Left ventricle myocardium inferior (tissue), 1 donor: ENCODE measurements at regions of chr2 and their contacts with region 1.

Region 1: DNA sequence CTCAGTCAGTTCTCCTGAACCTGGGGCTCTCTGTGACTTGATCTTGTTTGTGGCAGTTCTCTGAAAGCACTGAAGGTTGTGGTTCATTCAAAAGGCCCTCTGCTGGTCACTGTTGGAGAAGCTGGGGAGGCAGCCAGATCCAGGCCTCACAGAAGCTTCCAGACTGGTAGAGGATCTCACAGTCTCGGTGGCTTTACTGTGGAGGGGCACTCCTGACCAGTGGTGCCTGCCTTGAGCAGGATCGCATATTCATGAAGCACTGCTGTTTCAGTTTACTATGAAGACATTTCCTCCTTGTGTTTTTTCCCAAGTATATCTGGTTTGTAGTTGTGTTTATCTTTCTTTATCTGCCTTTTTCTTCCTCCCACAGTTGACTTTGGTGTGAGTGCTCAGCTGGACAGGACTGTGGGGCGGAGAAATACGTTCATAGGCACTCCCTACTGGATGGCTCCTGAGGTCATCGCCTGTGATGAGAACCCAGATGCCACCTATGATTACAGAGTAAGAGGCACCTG is 133.9 kb downstream of the MAP4K4 start:
- DNase-seq: peak; percentile 74
- H3K4me3 ChIP-seq: no peak overlapping the region
- H3K27ac ChIP-seq: peak overlapping the region; percentile 73
- H3K4me1 ChIP-seq: peaks cover 56% of the 10 kb centered on the region
- H3K27me3 ChIP-seq: no peaks in the 10 kb centered on the region
- CTCF ChIP-seq: peak; percentile 85

Region 2: DNA sequence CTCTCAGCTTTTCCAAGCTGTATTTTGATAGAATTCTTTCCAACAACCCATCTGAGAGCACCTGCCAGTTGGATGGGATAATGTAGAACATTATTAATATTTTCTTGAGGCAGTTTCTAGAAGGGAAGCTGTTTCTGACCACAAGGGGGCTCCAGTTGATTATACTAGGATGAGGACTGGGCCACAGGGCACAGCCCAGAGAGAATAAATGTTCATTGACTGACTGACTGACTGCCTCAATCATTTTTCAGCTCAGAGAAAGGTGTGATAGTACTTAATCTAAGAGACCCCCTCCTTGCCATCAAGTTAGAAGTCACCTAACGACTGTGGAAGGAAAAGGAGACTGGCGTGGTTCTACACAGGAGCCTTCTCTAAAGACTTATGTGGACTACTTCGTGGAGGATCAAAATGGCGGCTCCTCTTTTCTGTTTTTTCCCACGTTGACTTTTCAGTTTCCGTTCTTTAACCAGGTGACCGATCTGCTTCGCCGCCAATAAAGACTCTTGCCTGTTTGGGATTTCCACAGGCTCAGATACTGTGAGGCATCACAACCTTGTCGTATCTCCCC is 412.2 kb before region 1 on chr2:
- intact Hi-C with region 1: loop called (anchors 10 kb)
- DNase-seq: no peak
- H3K4me3 ChIP-seq: no peak overlapping the region
- H3K27ac ChIP-seq: no peak overlapping the region
- H3K4me1 ChIP-seq: peaks cover 7% of the 10 kb centered on the region
- H3K27me3 ChIP-seq: no peaks in the 10 kb centered on the region
- CTCF ChIP-seq: peak; percentile 85

Region 3: GRCh38 chr2:101518578-101519492 is 312.6 kb before region 1 on chr2:
- intact Hi-C with region 1: loop called (anchors 5 kb)
- DNase-seq: peak; percentile 35
- H3K4me3 ChIP-seq: peak overlapping the region; percentile 36
- H3K27ac ChIP-seq: peak overlapping the region; percentile 60
- H3K4me1 ChIP-seq: peaks cover 37% of the 10 kb centered on the region
- H3K27me3 ChIP-seq: no peaks in the 10 kb centered on the region
- CTCF ChIP-seq: peak; percentile 63

Region 4: DNA sequence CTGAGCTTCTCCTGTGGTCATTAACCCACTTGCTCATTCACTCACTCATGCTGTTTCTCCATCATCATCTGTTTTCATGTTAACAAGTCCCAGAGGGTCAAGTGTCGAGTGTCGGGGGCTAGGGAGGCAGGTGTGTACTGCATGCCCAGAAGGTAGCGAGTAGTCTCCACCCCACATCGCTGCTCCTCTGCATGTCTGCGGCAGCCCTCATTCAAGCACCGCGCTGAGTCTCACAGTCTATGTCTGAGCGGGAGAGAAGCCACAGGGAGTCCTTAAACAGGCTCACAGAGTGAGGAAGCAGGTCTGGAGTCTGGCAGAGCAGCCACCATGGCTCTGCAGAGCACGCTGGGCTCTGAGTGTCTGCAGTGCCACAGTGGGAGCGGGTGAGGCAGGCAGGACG is 39.0 kb after region 1 on chr2:
- intact Hi-C with region 1: no loop called
- DNase-seq: no peak
- H3K4me3 ChIP-seq: no peak overlapping the region
- H3K27ac ChIP-seq: no peak overlapping the region
- H3K4me1 ChIP-seq: peaks cover 12% of the 10 kb centered on the region
- H3K27me3 ChIP-seq: no peaks in the 10 kb centered on the region
- CTCF ChIP-seq: no peak

Region 5: DNA sequence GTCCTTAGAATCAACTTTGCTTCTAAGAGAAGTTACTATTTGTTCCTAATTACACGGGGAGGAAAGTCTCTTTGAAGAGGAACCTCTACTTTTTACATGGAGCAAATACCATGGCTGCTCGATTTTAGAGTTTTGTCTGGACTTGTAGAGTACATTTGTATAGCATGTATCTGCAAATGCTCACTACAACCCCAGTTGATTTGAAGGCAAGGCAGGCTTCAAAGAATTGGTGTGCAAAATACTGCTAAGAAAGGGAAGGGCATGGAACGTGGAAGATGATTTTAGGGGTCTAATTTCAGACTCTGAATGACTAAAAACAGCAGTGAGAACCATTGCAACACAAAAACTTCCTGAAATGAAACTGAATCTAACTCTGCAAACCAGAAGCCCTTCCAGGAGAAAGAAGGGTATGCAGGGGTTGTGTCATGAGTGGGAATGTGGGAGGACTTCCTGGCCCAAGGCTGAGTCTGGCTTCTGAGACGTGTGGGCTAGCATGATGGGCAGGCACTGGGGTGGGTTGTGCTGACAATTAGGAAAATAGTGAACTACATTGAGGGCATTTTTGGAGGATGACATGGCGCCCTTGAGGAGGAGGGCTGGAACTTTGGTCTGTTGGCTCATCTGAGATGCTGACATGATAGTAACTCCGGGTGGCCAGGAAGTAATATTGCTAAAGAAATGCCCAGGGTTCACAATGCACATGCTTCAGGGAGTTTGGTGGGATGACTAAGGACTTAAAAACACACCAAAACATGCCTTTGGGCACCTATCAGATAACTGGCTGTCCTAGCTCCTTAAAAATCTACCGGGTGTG is 141.4 kb after region 1 on chr2:
- intact Hi-C with region 1: no loop called
- DNase-seq: no peak
- H3K4me3 ChIP-seq: no peak overlapping the region
- H3K27ac ChIP-seq: no peak overlapping the region
- H3K4me1 ChIP-seq: peaks cover 3% of the 10 kb centered on the region
- H3K27me3 ChIP-seq: peaks cover 11% of the 10 kb centered on the region
- CTCF ChIP-seq: no peak